CD8-positive, alpha-beta T cell (primary cell): ENCODE measurements at regions of chr9 and their contacts with region 1.

Region 1: GRCh38 chr9:111896353-111896958 is at the start of gene UGCG:
- DNase-seq: peak; percentile 69 to 93 (median 84)
- ATAC-seq: peak; percentile 94
- H3K4me3 ChIP-seq: peak within 1 kb of the TSS; percentile 79 to 94
- H3K4me3 Mint-ChIP-seq: peak within 1 kb of the TSS; percentile 95
- H3K27ac ChIP-seq: peak within 1 kb of the TSS; percentile 62 to 71
- H3K27ac Mint-ChIP-seq: peak within 1 kb of the TSS; percentile 94
- H3K4me1 ChIP-seq: peaks cover 41% of the 10 kb centered on the region
- H3K4me1 Mint-ChIP-seq: peaks cover 19% of the 10 kb centered on the region
- H3K27me3 ChIP-seq: no peaks in the 10 kb centered on the region
- H3K27me3 Mint-ChIP-seq: no peaks in the 10 kb centered on the region
- CTCF ChIP-seq: no peak
- total RNA-seq, gene UGCG: 34.0 to 35.5 TPM

Region 2: GRCh38 chr9:111631071-111631971 is 265.1 kb before region 1 on chr9 and contains the start of gene DNAJC25:
- CTCF ChIA-PET with region 1: no interaction called
- POLR2A ChIA-PET with region 1: no interaction called
- intact Hi-C with region 1: loop called (anchors 10 kb)
- DNase-seq: peak; percentile 92 to 99 (median 96)
- ATAC-seq: peak; percentile 94
- H3K4me3 ChIP-seq: peak within 1 kb of the TSS; percentile 50 to 69
- H3K4me3 Mint-ChIP-seq: peak within 1 kb of the TSS; percentile 98
- H3K27ac ChIP-seq: peak within 1 kb of the TSS; percentile 78 to 80
- H3K27ac Mint-ChIP-seq: peak within 1 kb of the TSS; percentile 92
- H3K4me1 ChIP-seq: peaks cover 18% of the 10 kb centered on the region
- H3K4me1 Mint-ChIP-seq: peaks cover 47% of the 10 kb centered on the region
- H3K27me3 ChIP-seq: no peaks in the 10 kb centered on the region
- H3K27me3 Mint-ChIP-seq: no peaks in the 10 kb centered on the region
- CTCF ChIP-seq: no peak
- total RNA-seq, gene DNAJC25: 5.8 to 7.2 TPM

Region 3: DNA sequence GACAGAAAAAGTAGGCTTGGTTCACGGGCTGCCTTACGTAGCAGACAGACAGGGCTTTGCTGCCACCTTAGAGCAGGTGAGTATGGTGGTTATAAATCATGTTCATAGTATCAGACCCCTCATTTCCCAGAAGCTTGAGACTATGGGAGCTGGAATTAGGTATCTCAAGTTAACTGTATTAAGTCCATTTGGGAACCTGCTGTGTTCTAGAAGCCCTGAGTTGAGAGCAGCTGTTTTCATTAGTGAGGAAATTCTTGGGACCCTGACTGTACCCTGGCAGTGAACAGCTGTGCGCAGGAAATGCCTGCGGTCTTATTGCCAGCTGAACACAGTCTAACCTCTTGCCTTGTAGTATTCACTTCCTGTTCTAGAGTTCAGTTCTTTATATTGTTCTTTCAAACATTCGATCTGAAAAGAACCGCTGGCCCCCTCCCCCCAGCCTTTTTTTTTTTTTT is 30.0 kb after region 1 on chr9:
- CTCF ChIA-PET with region 1: interaction called, 3 read pairs
- POLR2A ChIA-PET with region 1: interaction called, 21 read pairs
- intact Hi-C with region 1: loop called (anchors 1 to 2 kb)
- DNase-seq: peak; percentile 8 to 83 (median 60)
- ATAC-seq: peak; percentile 94
- H3K4me3 ChIP-seq: peak overlapping the region in 1 of 2 experiments; percentile 36
- H3K4me3 Mint-ChIP-seq: peak overlapping the region; percentile 69
- H3K27ac ChIP-seq: peak overlapping the region; percentile 54 to 67
- H3K27ac Mint-ChIP-seq: peak overlapping the region; percentile 90
- H3K4me1 ChIP-seq: peaks cover 34% of the 10 kb centered on the region
- H3K4me1 Mint-ChIP-seq: peaks cover 43% of the 10 kb centered on the region
- H3K27me3 ChIP-seq: no peaks in the 10 kb centered on the region
- H3K27me3 Mint-ChIP-seq: no peaks in the 10 kb centered on the region
- CTCF ChIP-seq: no peak

Region 4: DNA sequence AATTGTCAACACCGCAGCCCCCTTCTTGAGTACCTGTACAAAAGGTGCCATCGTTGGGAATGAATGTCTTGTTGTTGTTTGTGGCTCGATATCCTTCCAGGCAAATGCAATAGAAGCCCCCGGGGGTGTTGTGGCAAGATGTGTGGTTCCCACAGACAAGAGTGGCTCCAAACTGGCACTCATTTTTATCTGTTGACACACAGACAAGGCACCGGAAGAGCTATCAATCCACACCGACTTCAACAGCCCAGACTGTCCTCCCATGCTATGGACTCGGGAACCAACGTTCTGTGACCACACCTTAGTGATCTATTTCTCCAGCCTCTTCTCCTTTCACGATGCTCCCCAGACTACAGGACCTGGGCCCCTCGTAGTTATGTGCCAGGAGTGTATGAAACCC is 252.8 kb after region 1 on chr9:
- CTCF ChIA-PET with region 1: no interaction called
- POLR2A ChIA-PET with region 1: no interaction called
- intact Hi-C with region 1: no loop called
- DNase-seq: no peak
- ATAC-seq: no peak
- H3K4me3 ChIP-seq: no peak overlapping the region
- H3K4me3 Mint-ChIP-seq: no peak overlapping the region
- H3K27ac ChIP-seq: no peak overlapping the region
- H3K27ac Mint-ChIP-seq: no peak overlapping the region
- H3K4me1 ChIP-seq: no peaks in the 10 kb centered on the region
- H3K4me1 Mint-ChIP-seq: no peaks in the 10 kb centered on the region
- H3K27me3 ChIP-seq: no peaks in the 10 kb centered on the region
- H3K27me3 Mint-ChIP-seq: no peaks in the 10 kb centered on the region
- CTCF ChIP-seq: no peak

Region 5: DNA sequence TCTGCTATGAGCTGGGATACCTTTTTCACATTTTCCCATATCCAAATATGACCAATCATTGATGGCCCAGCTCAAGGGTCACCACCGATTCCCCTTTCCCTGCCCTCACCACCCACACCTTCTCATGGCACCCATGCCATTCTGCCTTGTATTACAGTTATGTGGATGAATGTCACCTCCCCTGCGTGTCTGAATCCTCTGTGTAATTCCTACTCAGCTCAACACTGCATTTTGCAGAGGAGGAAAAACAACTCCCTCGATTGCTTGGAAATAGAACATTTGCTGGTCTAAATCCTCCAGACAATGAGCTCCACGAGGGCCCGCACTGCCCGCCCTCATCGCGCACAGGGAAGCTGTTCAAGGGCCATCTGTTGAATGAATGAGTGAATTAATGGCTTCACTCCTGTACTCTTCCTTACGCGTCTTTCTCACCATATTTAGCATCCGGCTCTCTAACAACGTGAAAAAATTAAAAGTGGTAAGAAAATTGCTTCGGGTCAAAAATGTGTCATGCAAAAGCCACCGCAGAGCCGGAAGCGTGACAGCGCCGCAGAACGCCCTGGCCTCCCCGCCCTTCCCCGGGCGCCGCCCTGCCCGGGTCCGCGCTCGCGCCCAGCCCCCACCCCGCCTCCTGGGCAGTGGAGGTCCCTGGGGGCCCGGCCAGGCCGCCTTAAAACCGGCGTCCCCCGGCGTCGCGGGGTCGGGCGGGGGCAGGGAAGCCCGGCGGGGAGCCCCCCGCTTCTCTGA is 277.9 kb after region 1 on chr9:
- CTCF ChIA-PET with region 1: no interaction called
- POLR2A ChIA-PET with region 1: no interaction called
- intact Hi-C with region 1: loop called in 1 of 2 experiments (anchors 1 kb)
- DNase-seq: peak; percentile 45 to 87 (median 74)
- ATAC-seq: peak; percentile 70
- H3K4me3 ChIP-seq: peak overlapping the region; percentile 43 to 73
- H3K4me3 Mint-ChIP-seq: peak overlapping the region; percentile 91
- H3K27ac ChIP-seq: peak overlapping the region; percentile 35 to 56
- H3K27ac Mint-ChIP-seq: peak overlapping the region; percentile 87
- H3K4me1 ChIP-seq: peaks cover 46% of the 10 kb centered on the region
- H3K4me1 Mint-ChIP-seq: peaks cover 73% of the 10 kb centered on the region
- H3K27me3 ChIP-seq: no peaks in the 10 kb centered on the region
- H3K27me3 Mint-ChIP-seq: no peaks in the 10 kb centered on the region
- CTCF ChIP-seq: no peak

Region 6: DNA sequence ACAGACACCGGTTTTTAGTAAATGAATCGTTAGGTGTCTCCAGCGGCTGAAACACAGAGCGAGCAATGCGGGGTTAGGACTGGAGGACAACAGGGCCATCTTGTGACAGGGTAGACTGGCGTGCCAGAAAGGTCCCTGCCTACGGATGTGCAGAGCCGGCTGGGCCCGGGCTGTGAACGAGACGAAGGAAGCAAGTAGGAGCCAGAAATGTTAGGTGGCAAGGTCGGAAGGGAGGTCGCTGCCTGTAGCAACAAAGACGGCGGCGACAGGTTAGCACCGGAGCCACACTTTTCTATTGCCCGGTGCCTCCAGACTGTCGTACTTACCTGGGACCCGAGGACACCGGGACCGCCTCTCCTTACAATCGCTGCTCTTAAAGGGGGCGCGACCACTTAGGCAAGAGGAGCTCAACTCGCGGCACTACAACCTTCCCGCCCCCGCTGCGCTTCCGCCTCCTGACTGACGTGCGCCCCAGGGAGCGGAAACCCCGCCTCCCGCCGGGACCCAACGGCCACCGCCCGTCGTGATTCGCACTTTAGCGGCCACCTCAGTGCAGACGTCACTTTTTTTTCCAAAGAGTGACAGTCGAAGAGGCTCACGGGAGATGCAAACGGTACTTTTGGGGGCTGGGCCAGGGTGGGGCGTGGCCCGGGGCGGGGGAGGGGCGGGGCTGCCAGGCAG is 821.3 kb after region 1 on chr9 and contains the start of gene INIP:
- CTCF ChIA-PET with region 1: no interaction called
- POLR2A ChIA-PET with region 1: interaction called, 3 read pairs
- intact Hi-C with region 1: loop called in 1 of 2 experiments (anchors 2 kb)
- DNase-seq: peak; percentile 94 to 99 (median 97)
- ATAC-seq: peak; percentile 90
- H3K4me3 ChIP-seq: peak within 1 kb of the TSS; percentile 83 to 97
- H3K4me3 Mint-ChIP-seq: peak within 1 kb of the TSS; percentile 94
- H3K27ac ChIP-seq: peak within 1 kb of the TSS; percentile 95 to 96
- H3K27ac Mint-ChIP-seq: peak within 1 kb of the TSS; percentile 98
- H3K4me1 ChIP-seq: peaks cover 15% of the 10 kb centered on the region
- H3K4me1 Mint-ChIP-seq: peaks cover 30% of the 10 kb centered on the region
- H3K27me3 ChIP-seq: no peaks in the 10 kb centered on the region
- H3K27me3 Mint-ChIP-seq: no peaks in the 10 kb centered on the region
- CTCF ChIP-seq: no peak
- total RNA-seq, gene INIP: 11.7 to 17.2 TPM